Cardiac septum (tissue), 1 donor: ENCODE measurements at regions of chr10 and their contacts with region 1.

Region 1: DNA sequence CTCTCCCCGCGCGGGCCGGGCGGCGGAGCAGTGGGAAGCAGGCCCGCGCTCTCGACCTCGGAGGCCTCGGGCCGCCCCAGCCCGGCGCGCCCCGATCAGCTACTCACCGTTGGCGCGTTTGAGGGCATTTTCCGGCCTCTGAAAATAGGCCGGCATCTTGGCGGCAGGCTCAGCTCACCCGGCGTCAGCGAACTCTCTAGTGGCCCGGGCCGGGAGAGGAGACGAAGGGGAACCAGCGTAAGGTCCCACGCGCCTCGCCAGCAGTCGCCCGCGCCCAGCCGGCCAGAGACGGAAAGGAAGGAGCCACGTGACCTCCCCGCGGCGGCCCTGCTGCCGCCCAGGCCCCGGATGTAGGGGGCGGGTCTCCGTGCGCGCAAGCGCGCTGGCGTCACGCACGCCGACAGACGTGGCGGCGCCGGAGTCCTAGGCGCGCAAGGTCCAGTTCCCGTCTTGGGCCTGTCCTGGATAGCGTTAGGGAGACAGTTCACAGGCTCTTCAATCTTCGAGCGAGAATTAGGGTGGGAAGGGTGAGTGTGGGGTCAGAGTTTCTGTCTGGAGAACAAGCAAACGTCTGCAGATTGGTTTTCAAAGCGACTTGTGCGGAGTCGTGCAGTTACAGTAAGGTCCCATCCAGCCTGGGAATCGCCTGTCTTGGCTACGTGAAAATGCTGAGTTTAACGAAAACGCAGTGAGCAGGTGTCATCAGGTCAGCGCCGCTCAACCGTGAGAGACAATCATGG is at the start of gene EIF3A:
- DNase-seq: peak; percentile 98
- total RNA-seq, gene EIF3A: 133 TPM

Region 2: GRCh38 chr10:118754720-118755480 is 325.8 kb before region 1 on chr10 and contains the start of gene CACUL1:
- intact Hi-C with region 1: loop called (anchors 2 kb)
- DNase-seq: peak; percentile 100
- total RNA-seq, gene CACUL1: 31.6 TPM

Region 3: GRCh38 chr10:119103903-119104652 is 23.4 kb after region 1 on chr10 and contains the start of gene DENND10:
- intact Hi-C with region 1: loop called (anchors 2 kb)
- DNase-seq: peak; percentile 96
- total RNA-seq, gene DENND10: 22.2 TPM

Region 4: DNA sequence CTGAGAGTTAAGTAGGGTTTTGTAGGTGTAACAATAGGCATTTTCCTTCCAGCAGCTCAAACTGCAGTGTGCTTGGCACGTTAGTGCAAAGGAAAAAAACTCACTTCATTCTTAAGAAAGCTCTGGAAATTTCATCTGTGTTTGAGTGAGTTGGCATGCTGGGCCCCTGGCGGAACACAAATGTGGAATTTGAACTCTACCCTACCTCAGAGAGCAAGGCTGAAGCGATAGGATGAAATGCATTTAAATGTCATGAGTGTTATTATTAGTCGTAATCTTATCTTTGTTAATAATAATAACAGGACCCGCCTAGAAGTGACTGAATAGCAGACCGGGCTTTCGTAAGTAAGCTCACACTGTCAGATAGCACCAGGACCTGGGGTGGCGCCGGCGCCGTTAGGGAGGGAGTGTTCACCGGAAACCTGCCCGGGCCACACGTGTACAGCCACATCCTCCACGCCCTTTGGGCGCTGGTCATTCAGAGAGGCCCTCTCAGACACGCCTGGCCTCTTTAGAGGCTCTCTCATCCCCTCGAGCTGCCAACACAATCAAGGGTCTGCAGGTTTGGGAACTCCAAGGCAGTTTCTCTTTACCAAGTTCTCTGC is 190.2 kb after region 1 on chr10:
- intact Hi-C with region 1: no loop called
- DNase-seq: peak; percentile 93